Astrocyte of the cerebellum (primary cell): ENCODE measurements at regions of chr1 and their contacts with region 1.

Region 1: GRCh38 chr1:212359794-212360479 is 54.7 kb downstream of the PACC1 start:
- DNase-seq: no peak
- H3K4me3 ChIP-seq: no peak overlapping the region
- CTCF ChIP-seq: no peak

Region 2: GRCh38 chr1:212455803-212456528 is 96.0 kb after region 1 on chr1:
- in situ Hi-C with region 1: loop called (anchors 5 kb)
- DNase-seq: peak; percentile 69
- H3K4me3 ChIP-seq: no peak overlapping the region
- CTCF ChIP-seq: peak; percentile 97